IMR-90 (cell line): ENCODE measurements at regions of chr18 and their contacts with region 1.

Region 1: GRCh38 chr18:59941331-59941730 is 41.5 kb downstream of the PMAIP1 start:
- DNase-seq: no peak
- ATAC-seq: no peak
- H3K4me3 ChIP-seq: no peak overlapping the region
- H3K27ac ChIP-seq: no peak overlapping the region
- H3K4me1 ChIP-seq: no peaks in the 10 kb centered on the region
- H3K27me3 ChIP-seq: no peaks in the 10 kb centered on the region
- CTCF ChIP-seq: no peak
- POLR2A ChIP-seq: no peak
- RAD21 ChIP-seq: no peak

Region 2: DNA sequence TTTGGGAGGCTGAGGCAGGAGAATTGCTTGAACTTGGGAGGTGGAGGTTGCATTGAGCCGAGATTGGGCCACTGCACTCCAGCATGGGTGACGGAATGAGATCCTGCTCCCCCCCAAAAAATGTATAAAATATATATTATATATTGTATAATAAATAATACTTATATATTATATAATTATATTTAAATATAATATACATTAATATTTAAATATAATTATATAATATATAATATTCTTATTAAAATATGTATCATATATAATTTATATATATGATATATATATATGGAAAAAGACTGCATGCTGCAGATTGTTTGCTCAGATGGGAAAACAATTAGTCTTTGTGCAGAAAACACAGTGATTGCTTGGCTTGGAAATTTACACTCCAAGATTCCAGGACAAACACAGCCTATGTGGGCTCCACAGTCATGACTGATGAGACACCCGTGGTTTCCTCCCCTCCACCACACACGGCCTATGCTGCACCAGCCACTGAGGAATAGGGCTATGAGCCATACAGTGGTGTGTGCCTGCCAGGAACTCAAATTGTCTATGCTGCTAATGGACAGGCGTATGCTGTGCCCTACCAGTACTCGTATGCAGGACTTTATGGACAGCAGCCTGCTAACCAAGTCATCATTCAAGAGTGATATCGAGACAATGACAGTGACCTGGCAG is 11.6 kb before region 1 on chr18:
- CTCF ChIA-PET with region 1: no interaction called
- POLR2A ChIA-PET with region 1: no interaction called
- dilution Hi-C with region 1: no loop called
- in situ Hi-C with region 1: no loop called
- intact Hi-C with region 1: loop called (anchors 1 kb)
- DNase-seq: peak; percentile 52
- ATAC-seq: peak; percentile 51; the same call in 1 of the 2 replicates
- H3K4me3 ChIP-seq: no peak overlapping the region
- H3K27ac ChIP-seq: no peak overlapping the region
- H3K4me1 ChIP-seq: no peaks in the 10 kb centered on the region; the same call in 1 of the 2 replicates
- H3K27me3 ChIP-seq: no peaks in the 10 kb centered on the region
- CTCF ChIP-seq: no peak
- POLR2A ChIP-seq: no peak
- RAD21 ChIP-seq: no peak